CD4-positive, alpha-beta memory T cell (primary cell): ENCODE measurements at regions of chr3 and their contacts with region 1.

Region 1: DNA sequence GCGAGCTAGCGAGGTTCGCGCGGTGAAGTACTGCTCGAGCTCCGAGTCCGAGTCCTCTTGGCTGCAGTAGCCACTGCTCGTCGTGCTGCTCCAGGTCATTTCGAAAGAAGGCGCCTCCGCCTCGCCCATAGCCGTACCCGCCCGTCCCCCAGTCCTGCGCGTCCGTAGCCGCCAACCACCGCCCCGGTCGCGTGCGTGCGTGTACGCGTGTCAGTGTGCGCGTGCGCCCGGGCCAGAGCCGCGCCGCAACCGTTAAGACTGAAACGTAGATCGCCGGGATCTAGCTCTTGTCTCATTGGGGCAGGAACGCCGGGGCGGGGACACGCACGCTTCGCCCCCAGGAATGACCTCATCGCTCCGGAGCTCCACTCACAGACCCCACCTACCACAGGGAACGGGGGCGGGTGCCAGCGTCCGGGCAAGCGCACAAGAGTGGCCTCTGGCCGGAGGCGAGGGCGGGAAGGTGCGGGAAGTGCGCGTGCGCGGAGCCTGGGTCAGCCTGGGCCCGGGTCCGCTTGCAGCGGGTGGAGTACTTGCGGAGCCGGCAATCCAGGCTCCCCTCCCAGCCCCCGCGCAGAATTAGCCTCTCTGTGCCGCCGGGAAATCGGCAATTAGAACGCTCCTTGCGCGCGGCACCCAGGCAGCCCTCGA is 3.3 kb downstream of the RASSF1 start:
- DNase-seq: peak; percentile 89 to 98 (median 92)
- H3K4me3 ChIP-seq: peak overlapping the region; percentile 87 to 94
- H3K4me3 Mint-ChIP-seq: peak overlapping the region; percentile 88 to 98 (median 95)
- H3K27ac ChIP-seq: peak overlapping the region; percentile 96
- H3K27ac Mint-ChIP-seq: peak overlapping the region; percentile 93 to 100 (median 98)
- H3K4me1 ChIP-seq: peaks cover 80% of the 10 kb centered on the region
- H3K4me1 Mint-ChIP-seq: peaks cover 42 to 76% (median 56%) of the 10 kb centered on the region in 4 donors
- H3K27me3 ChIP-seq: no peaks in the 10 kb centered on the region
- H3K27me3 Mint-ChIP-seq: no peaks in the 10 kb centered on the region

Region 2: DNA sequence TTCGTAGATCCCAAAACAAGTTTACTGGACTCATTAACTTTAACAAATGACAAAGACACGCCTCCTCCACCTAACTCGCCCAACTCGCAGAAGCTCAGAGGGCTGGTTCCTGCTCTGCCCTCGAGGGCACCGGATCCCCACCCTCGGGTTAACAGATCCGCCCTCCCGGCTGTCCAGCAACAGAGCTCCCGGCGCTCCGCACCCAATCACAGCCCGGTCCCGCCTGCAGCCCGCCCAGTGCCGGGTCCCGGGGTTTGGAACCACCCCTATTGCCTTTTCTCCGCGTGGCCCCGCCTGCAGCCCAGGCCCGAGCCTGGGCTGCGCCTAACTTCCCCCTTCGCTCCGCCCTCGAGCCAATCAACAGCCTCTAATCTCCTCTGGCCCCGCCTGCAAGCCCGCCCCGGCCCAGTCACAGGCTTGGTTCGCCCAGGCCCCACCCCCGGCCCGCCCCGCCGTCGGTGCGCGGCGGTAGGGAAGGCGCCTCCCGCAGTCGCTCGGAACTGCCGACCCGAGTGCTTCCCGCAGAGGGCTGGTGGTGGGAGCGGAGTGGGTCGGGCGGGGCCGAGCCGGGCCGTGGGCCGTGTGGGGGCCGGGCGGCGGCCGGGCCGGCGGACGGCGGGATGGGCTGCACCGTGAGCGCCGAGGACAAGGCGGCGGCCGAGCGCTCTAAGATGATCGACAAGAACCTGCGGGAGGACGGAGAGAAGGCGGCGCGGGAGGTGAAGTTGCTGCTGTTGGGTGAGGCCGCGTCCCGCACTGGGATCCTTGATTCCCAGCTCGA is 101.4 kb before region 1 on chr3 and contains the start of gene GNAI2:
- CTCF ChIA-PET with region 1: no interaction called
- POLR2A ChIA-PET with region 1: interaction called, 28 read pairs
- intact Hi-C with region 1: loop called (anchors 5 kb)
- DNase-seq: peak; percentile 99
- H3K4me3 ChIP-seq: peak within 1 kb of the TSS; percentile 75 to 94
- H3K4me3 Mint-ChIP-seq: peak within 1 kb of the TSS; percentile 96 to 99 (median 98)
- H3K27ac ChIP-seq: peak within 1 kb of the TSS; percentile 76
- H3K27ac Mint-ChIP-seq: peak within 1 kb of the TSS; percentile 91 to 97 (median 94)
- H3K4me1 ChIP-seq: peaks cover 40% of the 10 kb centered on the region
- H3K4me1 Mint-ChIP-seq: peaks cover 20 to 58% (median 35%) of the 10 kb centered on the region in 4 donors
- H3K27me3 ChIP-seq: no peaks in the 10 kb centered on the region
- H3K27me3 Mint-ChIP-seq: no peaks in the 10 kb centered on the region
- total RNA-seq, gene GNAI2: 292 to 300 TPM

Region 3: DNA sequence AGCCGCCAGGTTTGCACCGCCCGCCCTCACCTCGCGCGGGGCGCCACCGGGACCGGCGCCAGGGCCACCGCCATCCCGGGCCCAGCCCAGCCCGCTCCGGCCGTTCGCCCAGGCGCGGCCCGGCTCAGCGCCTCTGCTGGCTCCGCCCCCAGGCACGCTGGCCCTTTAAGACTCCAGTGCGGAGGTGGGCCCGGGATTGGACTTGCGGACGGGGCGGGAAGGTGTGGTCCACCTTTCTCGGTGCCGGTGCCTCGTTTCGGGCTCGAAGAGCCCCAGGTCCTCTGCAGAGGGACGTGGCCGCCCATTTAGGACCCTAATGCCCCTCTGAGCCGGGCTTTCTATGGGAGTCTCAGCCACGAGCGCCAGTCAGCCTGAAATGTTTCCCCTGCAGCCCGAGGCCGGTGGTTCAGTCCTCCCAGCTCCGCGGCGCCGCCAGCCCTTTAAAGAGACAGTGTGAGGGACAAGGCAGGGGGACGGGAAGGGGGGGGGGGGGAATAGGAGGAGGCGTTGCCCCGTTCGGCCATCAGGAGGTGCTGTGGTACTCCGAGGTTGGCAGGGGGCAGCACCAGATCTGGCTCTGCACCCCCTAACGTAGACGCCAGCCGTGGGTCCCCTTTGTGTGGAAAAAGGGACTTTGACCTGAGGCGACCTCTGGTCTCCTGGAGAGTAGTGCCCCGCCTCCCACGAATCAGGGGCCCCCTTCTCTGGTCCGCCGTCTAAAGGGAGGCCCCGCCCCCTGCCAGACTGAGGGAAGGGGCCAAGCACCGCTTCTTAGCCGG is 15.8 kb before region 1 on chr3:
- CTCF ChIA-PET with region 1: interaction called, 25 read pairs
- POLR2A ChIA-PET with region 1: interaction called, 595 read pairs
- intact Hi-C with region 1: loop called (anchors 1 kb)
- DNase-seq: peak; percentile 80 to 88 (median 83)
- H3K4me3 ChIP-seq: peak overlapping the region; percentile 23 to 87
- H3K4me3 Mint-ChIP-seq: peak overlapping the region; percentile 80 to 90 (median 86)
- H3K27ac ChIP-seq: peak overlapping the region; percentile 73
- H3K27ac Mint-ChIP-seq: peak overlapping the region; percentile 90 to 95 (median 93)
- H3K4me1 ChIP-seq: peaks cover 38% of the 10 kb centered on the region
- H3K4me1 Mint-ChIP-seq: peaks cover 18 to 57% (median 38%) of the 10 kb centered on the region in 4 donors
- H3K27me3 ChIP-seq: no peaks in the 10 kb centered on the region
- H3K27me3 Mint-ChIP-seq: no peaks in the 10 kb centered on the region

Region 4: GRCh38 chr3:50350527-50351322 is 13.4 kb after region 1 on chr3 and contains the starts of genes CYB561D2 and NPRL2:
- CTCF ChIA-PET with region 1: interaction called, 84 read pairs
- POLR2A ChIA-PET with region 1: interaction called, 595 read pairs
- intact Hi-C with region 1: loop called (anchors 1 kb)
- DNase-seq: peak; percentile 99 to 100 (median 99)
- H3K4me3 ChIP-seq: peak within 1 kb of the TSS; percentile 66 to 98
- H3K4me3 Mint-ChIP-seq: peak within 1 kb of the TSS; percentile 91 to 99 (median 96)
- H3K27ac ChIP-seq: peak within 1 kb of the TSS; percentile 94
- H3K27ac Mint-ChIP-seq: peak within 1 kb of the TSS; percentile 96 to 99 (median 99)
- H3K4me1 ChIP-seq: peaks cover 58% of the 10 kb centered on the region
- H3K4me1 Mint-ChIP-seq: peaks cover 28 to 78% (median 53%) of the 10 kb centered on the region in 4 donors
- H3K27me3 ChIP-seq: no peaks in the 10 kb centered on the region
- H3K27me3 Mint-ChIP-seq: no peaks in the 10 kb centered on the region
- total RNA-seq, gene CYB561D2: 39.6 to 40.0 TPM
- total RNA-seq, gene NPRL2: 50.0 to 53.0 TPM

Region 5: GRCh38 chr3:50358911-50359759 is 21.8 kb after region 1 on chr3 and contains the start of gene TMEM115:
- CTCF ChIA-PET with region 1: interaction called, 7 read pairs
- POLR2A ChIA-PET with region 1: interaction called, 595 read pairs
- intact Hi-C with region 1: no loop called
- DNase-seq: peak; percentile 93 to 99 (median 96)
- H3K4me3 ChIP-seq: peak within 1 kb of the TSS; percentile 78 to 95
- H3K4me3 Mint-ChIP-seq: peak within 1 kb of the TSS; percentile 95 to 100 (median 98)
- H3K27ac ChIP-seq: peak within 1 kb of the TSS; percentile 97
- H3K27ac Mint-ChIP-seq: peak within 1 kb of the TSS; percentile 96 to 98 (median 98)
- H3K4me1 ChIP-seq: peaks cover 44% of the 10 kb centered on the region
- H3K4me1 Mint-ChIP-seq: peaks cover 30 to 49% (median 39%) of the 10 kb centered on the region in 4 donors
- H3K27me3 ChIP-seq: no peaks in the 10 kb centered on the region
- H3K27me3 Mint-ChIP-seq: no peaks in the 10 kb centered on the region
- total RNA-seq, gene TMEM115: 31.1 to 34.6 TPM

Region 6: DNA sequence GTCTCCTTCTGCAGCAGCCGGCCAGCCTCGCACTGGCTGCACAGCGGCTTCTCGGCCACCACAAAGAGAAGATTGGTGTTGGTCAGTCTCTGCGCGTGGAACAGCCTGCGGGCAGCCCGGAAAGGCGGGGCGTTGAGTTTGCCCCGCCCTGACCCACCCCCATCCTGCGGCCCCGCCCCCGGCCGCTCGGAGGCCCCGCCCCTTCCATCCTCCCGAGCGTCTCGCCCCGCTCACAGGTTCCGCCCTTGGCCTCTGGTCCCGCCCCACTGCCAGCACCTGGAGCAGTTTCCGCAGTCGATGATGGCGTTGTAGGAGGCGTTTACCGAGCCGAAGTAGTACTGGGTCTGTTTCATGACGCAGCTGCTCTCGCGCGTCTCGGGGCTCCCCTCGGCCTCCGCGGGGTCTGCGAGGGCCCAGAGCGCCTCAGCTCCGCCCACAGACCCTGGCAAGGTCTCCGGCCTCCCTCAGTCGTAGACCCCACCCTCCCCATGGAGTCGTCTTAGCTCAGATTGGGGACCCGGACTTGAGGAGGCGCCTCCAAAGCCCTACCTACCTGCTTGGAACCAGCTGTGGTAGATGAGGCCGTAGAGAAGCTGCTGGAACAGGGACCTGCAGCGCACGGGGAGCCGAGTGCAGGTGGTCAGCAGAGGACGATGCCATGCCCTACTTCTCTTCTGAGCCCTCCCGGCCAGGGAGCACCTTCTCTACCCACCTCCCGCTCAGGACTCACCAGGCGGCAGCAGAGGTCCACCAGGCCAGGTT is 27.9 kb after region 1 on chr3:
- CTCF ChIA-PET with region 1: no interaction called
- POLR2A ChIA-PET with region 1: interaction called, 595 read pairs
- intact Hi-C with region 1: no loop called
- DNase-seq: peak; percentile 92 to 97 (median 95)
- H3K4me3 ChIP-seq: peak overlapping the region; percentile 73 to 100
- H3K4me3 Mint-ChIP-seq: peak overlapping the region; percentile 86 to 94 (median 90)
- H3K27ac ChIP-seq: peak overlapping the region; percentile 87
- H3K27ac Mint-ChIP-seq: peak overlapping the region; percentile 91 to 97 (median 95)
- H3K4me1 ChIP-seq: peaks cover 30% of the 10 kb centered on the region
- H3K4me1 Mint-ChIP-seq: peaks cover 4 to 35% (median 18%) of the 10 kb centered on the region in 4 donors
- H3K27me3 ChIP-seq: no peaks in the 10 kb centered on the region
- H3K27me3 Mint-ChIP-seq: peaks cover 0 to 1% of the 10 kb centered on the region in 2 donors

Region 7: DNA sequence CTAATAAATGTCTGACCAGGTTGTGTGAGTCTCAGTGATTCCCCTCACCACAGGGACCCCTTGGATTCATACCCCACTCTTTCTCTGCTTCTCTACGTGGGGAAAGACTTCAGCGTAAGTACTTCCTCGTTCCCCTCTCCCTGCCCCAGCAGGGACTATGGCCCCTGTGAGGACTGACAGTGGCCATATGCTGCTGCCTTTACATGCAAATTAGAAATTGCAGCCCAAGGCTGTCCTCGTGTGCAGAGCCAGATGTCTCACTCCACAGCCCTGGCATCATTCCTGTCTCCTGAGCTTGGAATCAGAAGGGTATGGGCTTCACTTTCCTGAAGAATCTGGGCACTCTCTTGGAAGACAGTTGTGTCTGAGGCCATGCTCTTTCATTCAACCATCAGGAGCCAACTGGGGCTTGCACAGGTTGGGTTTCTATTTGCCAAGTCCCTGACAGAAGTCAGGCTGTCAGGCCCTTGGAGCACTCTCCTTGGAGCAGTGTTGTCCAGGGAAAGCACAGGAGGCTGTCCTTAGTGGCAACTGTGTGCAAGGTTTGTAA is 1493.6 kb after region 1 on chr3:
- CTCF ChIA-PET with region 1: no interaction called
- POLR2A ChIA-PET with region 1: no interaction called
- intact Hi-C with region 1: no loop called
- DNase-seq: no peak
- H3K4me3 ChIP-seq: no peak overlapping the region
- H3K4me3 Mint-ChIP-seq: peak overlapping the region in 1 of 8 donors; percentile 48
- H3K27ac ChIP-seq: no peak overlapping the region
- H3K27ac Mint-ChIP-seq: no peak overlapping the region
- H3K4me1 ChIP-seq: no peaks in the 10 kb centered on the region
- H3K4me1 Mint-ChIP-seq: peaks cover 0 to 2% (median 0%) of the 10 kb centered on the region in 4 donors
- H3K27me3 ChIP-seq: peaks cover 3% of the 10 kb centered on the region
- H3K27me3 Mint-ChIP-seq: peaks cover 21 to 25% of the 10 kb centered on the region in 2 donors